ENCODE measurements at regions of chr13 and their contacts with region 1.

Region 1: DNA sequence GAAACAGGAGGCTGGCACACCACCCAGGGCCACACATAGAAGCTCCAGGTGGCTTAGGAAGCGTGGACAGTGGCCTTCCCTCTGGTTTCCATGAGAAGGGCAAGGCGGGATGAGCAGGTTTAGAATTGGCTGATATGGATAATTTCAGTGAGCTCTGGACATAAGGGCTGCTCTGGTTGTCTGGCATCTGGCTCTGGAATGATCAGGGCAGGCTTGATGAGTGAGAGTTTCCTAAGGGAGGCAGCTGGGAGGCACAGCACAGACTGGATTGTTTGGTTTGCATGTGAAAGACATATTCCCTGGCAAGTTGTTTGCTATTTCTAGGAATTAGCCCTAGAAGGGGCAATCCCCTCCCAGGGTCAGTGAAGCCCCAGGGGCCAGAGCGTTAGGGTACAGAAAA is 129.5 kb downstream of the ATP8A2 start:
- DNase-seq: no peak
- H3K4me3 ChIP-seq: no peak overlapping the region
- H3K27ac ChIP-seq: no peak overlapping the region
- H3K4me1 ChIP-seq: no peaks in the 10 kb centered on the region
- H3K27me3 ChIP-seq: peaks cover 1% of the 10 kb centered on the region
- CTCF ChIP-seq: no peak

Region 2: GRCh38 chr13:25085125-25085742 is 416.0 kb before region 1 on chr13:
- CTCF ChIA-PET with region 1: no interaction called
- dilution Hi-C with region 1: no loop called
- in situ Hi-C with region 1: no loop called
- intact Hi-C with region 1: no loop called
- DNase-seq: peak; percentile 38
- H3K4me3 ChIP-seq: no peak overlapping the region
- H3K27ac ChIP-seq: no peak overlapping the region
- H3K4me1 ChIP-seq: no peaks in the 10 kb centered on the region
- H3K27me3 ChIP-seq: peaks cover 3% of the 10 kb centered on the region
- CTCF ChIP-seq: peak; percentile 64 to 79

Region 3: GRCh38 chr13:25406377-25406915 is 94.8 kb before region 1 on chr13:
- CTCF ChIA-PET with region 1: no interaction called
- dilution Hi-C with region 1: no loop called
- in situ Hi-C with region 1: no loop called
- intact Hi-C with region 1: loop called (anchors 10 kb)
- DNase-seq: peak; percentile 8
- H3K4me3 ChIP-seq: no peak overlapping the region
- H3K27ac ChIP-seq: no peak overlapping the region
- H3K4me1 ChIP-seq: no peaks in the 10 kb centered on the region
- H3K27me3 ChIP-seq: no peaks in the 10 kb centered on the region
- CTCF ChIP-seq: peak; percentile 17 to 44

Region 4: DNA sequence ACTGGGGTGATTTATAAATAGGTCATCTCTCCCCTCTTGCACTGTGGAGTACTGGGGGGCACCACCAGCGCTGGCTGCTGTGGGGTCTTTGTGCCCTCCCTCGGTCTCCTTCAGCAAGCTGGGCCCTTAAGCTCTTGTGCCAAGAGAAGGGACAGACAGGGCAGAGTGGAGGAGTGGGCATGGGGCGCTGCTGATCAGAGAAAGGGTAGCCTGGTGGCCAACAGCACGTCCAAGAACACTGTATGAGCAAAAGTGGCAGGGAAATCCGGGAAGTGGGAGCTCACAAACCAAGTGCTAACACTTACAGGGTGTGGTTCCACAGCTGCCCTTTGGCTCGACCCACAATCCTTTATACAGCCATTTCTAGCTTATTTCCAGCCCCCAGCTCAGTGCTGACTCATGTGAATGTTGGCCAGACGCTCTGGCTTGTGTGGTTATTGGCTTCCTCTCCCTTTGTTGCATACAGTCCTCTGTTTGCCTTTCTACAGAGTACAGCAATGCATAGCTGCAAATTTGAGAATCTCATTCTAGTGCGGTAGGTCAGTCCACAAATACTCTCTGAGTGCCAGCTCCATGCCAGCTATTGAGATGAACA is 251.8 kb after region 1 on chr13:
- CTCF ChIA-PET with region 1: no interaction called
- dilution Hi-C with region 1: no loop called
- in situ Hi-C with region 1: no loop called
- intact Hi-C with region 1: no loop called
- DNase-seq: peak; percentile 74
- H3K4me3 ChIP-seq: no peak overlapping the region
- H3K27ac ChIP-seq: no peak overlapping the region
- H3K4me1 ChIP-seq: peaks cover 15% of the 10 kb centered on the region
- H3K27me3 ChIP-seq: no peaks in the 10 kb centered on the region
- CTCF ChIP-seq: no peak

Measured in mammary epithelial cell (primary cell).